ENCODE measurements at regions of chr9 and their contacts with region 1.

Region 1: GRCh38 chr9:127734747-127735529 is at the start of gene TOR2A:
- DNase-seq: peak; percentile 95 to 96
- ATAC-seq: peak; percentile 91 to 93
- H3K4me3 ChIP-seq: peak within 1 kb of the TSS; percentile 55 to 85 (median 70)
- H3K27ac ChIP-seq: peak within 1 kb of the TSS; percentile 86 to 98 (median 91)
- H3K4me1 ChIP-seq: peaks cover 14 to 23% of the 10 kb centered on the region in 2 donors
- H3K27me3 ChIP-seq: no peaks in the 10 kb centered on the region
- CTCF ChIP-seq: peak; percentile 95 to 99 (median 98)
- POLR2A ChIP-seq: peak; percentile 91 to 92
- total RNA-seq, gene TOR2A: 3.2 to 10.6 (median 9.6) TPM

Region 2: GRCh38 chr9:127586537-127586936 is 148.4 kb before region 1 on chr9:
- in situ Hi-C with region 1: loop called (anchors 5 to 10 kb)
- intact Hi-C with region 1: loop called (anchors 1 kb)
- DNase-seq: peak; percentile 68 to 69
- ATAC-seq: peak; percentile 82 to 90
- H3K4me3 ChIP-seq: no peak overlapping the region
- H3K27ac ChIP-seq: no peak overlapping the region
- H3K4me1 ChIP-seq: no peaks in the 10 kb centered on the region
- H3K27me3 ChIP-seq: no peaks in the 10 kb centered on the region
- CTCF ChIP-seq: peak; percentile 77 to 86 (median 84)
- POLR2A ChIP-seq: no peak

Region 3: DNA sequence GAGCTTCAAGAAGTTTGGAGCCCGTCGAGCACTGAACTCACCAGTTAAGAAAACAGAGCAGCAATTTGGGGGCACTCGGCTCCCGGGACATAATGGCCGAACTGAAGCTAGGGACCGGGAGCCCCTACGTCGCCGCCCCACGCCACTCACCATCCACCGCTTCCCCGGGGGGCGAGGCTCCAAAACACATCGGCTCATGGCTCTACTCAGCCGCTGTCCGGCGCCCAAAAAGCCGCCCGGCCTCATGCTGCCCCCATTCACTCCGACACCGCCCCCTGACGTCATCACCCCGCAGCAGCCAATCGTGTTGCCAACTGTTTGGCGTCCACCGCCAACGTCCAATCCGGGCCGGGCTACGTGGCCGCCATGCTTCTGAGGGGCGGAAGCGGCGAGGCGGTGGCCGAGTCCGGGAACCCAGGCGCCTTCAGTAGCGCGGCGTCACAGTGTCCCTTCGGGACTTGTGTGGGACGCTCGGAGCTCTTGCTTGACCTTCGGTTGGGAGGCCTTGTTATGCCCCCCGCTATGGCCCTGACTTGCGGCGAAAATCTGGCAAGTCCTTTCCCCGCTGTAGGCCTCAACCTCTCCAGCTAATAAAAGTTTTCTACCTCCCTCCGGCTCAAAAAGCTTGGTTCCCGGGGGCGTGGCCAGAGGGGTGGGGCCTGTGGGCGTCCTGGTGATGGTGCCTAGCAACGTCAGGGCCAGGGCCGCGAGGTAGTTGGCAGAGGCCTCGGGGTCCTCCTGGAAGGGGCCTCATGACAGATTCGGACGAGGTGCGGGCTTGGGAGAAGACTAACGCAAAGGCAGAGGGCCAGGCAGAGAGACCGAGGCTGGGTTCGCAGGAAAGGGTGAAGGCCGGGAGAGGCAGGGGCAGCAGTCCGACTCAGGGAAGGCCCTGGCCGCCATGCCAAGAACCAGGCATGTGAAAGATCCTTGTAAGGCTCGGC is 19.3 kb before region 1 on chr9 and contains the starts of genes PTRH1 and TTC16:
- in situ Hi-C with region 1: no loop called
- intact Hi-C with region 1: loop called (anchors 1 kb)
- DNase-seq: peak; percentile 95 to 96
- ATAC-seq: peak; percentile 94 to 96
- H3K4me3 ChIP-seq: peak within 1 kb of the TSS; percentile 74 to 85 (median 78)
- H3K27ac ChIP-seq: peak within 1 kb of the TSS; percentile 84 to 86 (median 84)
- H3K4me1 ChIP-seq: peaks cover 12 to 14% of the 10 kb centered on the region in 2 donors
- H3K27me3 ChIP-seq: no peaks in the 10 kb centered on the region
- CTCF ChIP-seq: no peak
- POLR2A ChIP-seq: peak; percentile 71 to 78
- total RNA-seq, gene PTRH1: 16.9 to 38.6 (median 26.3) TPM
- total RNA-seq, gene TTC16: not detected

Region 4: GRCh38 chr9:127785023-127785932 is 50.3 kb after region 1 on chr9:
- in situ Hi-C with region 1: loop called (anchors 5 to 10 kb)
- intact Hi-C with region 1: loop called (anchors 1 kb)
- DNase-seq: peak; percentile 73 to 84
- ATAC-seq: peak; percentile 80
- H3K4me3 ChIP-seq: peak overlapping the region; percentile 59 to 100 (median 92)
- H3K27ac ChIP-seq: peak overlapping the region; percentile 89 to 98 (median 96)
- H3K4me1 ChIP-seq: peaks cover 7 to 12% of the 10 kb centered on the region in 2 donors
- H3K27me3 ChIP-seq: no peaks in the 10 kb centered on the region
- CTCF ChIP-seq: peak; percentile 79 to 99 (median 99)
- POLR2A ChIP-seq: no peak

Measured in gastrocnemius medialis (tissue), 4 donors.